Mammary epithelial cell (primary cell): ENCODE measurements at regions of chr11 and their contacts with region 1.

Region 1: GRCh38 chr11:35138943-35139721 is at the start of gene CD44:
- DNase-seq: peak; percentile 89
- H3K4me3 ChIP-seq: peak within 1 kb of the TSS; percentile 85 to 98 (median 88)
- H3K27ac ChIP-seq: peak within 1 kb of the TSS; percentile 95
- H3K4me1 ChIP-seq: peaks cover 29% of the 10 kb centered on the region
- H3K27me3 ChIP-seq: no peaks in the 10 kb centered on the region
- CTCF ChIP-seq: no peak
- total RNA-seq, gene CD44: 1,362 to 2,544 TPM

Region 2: DNA sequence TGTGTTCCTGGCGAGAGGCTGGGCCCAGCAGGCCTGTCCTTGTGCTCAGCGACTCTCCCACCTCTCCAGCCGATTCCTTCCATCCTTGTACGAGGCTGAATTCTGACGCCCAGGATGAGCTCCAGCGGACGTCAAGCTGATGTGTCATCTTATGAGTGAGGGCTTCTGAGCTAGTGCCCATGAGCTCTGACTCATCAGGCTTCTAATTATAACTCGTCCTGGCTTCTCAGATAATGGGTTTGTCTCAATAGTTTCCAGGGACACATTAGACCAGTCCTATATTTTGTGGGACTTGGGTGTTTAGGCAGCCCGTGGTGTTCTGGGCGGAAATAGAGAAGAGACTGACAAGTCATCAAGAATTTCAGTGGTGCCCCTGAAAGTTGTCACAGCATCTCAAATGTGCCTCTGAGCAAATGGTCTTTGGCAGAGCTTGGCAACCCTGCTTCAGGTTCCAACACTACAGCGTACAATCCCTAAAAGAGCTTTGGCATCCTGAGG is 108.4 kb before region 1 on chr11:
- CTCF ChIA-PET with region 1: interaction called, 5 read pairs
- dilution Hi-C with region 1: loop called (anchors 5 kb)
- in situ Hi-C with region 1: no loop called
- intact Hi-C with region 1: loop called (anchors 1 kb)
- DNase-seq: peak; percentile 97
- H3K4me3 ChIP-seq: peak overlapping the region in 1 of 3 experiments; percentile 4
- H3K27ac ChIP-seq: peak overlapping the region; percentile 97
- H3K4me1 ChIP-seq: peaks cover 45% of the 10 kb centered on the region
- H3K27me3 ChIP-seq: no peaks in the 10 kb centered on the region
- CTCF ChIP-seq: no peak

Region 3: GRCh38 chr11:35111161-35112055 is 27.7 kb before region 1 on chr11:
- CTCF ChIA-PET with region 1: no interaction called
- dilution Hi-C with region 1: no loop called
- in situ Hi-C with region 1: no loop called
- intact Hi-C with region 1: loop called (anchors 1 kb)
- DNase-seq: peak; percentile 99
- H3K4me3 ChIP-seq: peak overlapping the region in 1 of 3 experiments; percentile 17
- H3K27ac ChIP-seq: peak overlapping the region; percentile 94
- H3K4me1 ChIP-seq: peaks cover 70% of the 10 kb centered on the region
- H3K27me3 ChIP-seq: no peaks in the 10 kb centered on the region
- CTCF ChIP-seq: no peak

Region 4: DNA sequence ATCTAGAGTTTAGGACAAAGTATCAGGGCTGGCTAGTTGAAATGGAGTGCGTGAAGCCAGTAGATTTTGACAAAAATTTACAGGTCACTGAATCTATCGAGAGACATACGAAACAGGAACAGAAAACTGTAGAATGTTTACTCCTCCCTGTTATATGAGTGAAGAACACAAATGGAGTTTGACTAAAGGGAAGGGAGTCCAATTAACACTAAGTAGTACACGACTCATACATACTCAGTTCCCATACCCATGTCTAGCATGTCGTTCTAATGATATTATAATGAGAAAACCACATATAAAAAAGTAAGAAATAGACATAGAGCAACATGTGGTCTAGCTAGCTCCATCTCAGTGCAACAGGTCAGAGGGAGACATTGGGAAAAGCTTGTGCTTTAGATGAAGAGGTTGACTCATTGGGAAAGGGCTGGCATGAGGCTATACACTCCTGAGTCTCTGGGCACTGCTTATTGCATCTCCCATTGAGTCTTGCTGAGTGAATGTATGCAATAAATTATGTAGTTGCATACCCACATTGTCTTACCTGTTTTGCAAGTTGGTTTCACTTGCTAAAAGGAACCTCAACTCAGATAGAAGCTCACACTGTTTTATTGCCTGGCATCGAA is 43.3 kb after region 1 on chr11:
- CTCF ChIA-PET with region 1: no interaction called
- dilution Hi-C with region 1: loop called (anchors 5 kb)
- in situ Hi-C with region 1: no loop called
- intact Hi-C with region 1: no loop called
- DNase-seq: no peak
- H3K4me3 ChIP-seq: no peak overlapping the region
- H3K27ac ChIP-seq: peak overlapping the region; percentile 3
- H3K4me1 ChIP-seq: peaks cover 28% of the 10 kb centered on the region
- H3K27me3 ChIP-seq: no peaks in the 10 kb centered on the region
- CTCF ChIP-seq: no peak

Region 5: DNA sequence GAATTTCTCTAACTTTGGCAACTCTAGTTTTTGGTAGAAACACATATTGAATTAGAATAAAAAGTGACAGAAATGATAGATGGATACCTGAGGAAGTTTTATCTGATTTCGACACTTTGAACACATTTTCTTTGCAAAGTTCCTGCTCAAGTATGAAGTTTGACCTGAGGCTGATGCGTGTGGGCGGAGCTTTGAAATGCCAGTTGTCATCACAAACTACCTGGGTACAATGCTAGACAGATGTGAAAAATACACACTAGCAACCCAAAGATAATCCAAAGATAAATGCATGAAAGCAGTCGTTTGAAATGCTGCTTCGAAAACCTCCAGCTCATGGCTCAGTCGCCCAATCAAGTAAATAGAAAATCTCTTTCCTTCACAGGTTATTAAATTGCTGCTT is 54.6 kb after region 1 on chr11:
- CTCF ChIA-PET with region 1: no interaction called
- dilution Hi-C with region 1: no loop called
- in situ Hi-C with region 1: no loop called
- intact Hi-C with region 1: no loop called
- DNase-seq: no peak
- H3K4me3 ChIP-seq: no peak overlapping the region
- H3K27ac ChIP-seq: no peak overlapping the region
- H3K4me1 ChIP-seq: no peaks in the 10 kb centered on the region
- H3K27me3 ChIP-seq: no peaks in the 10 kb centered on the region
- CTCF ChIP-seq: no peak